Left cardiac atrium (tissue), 4 donors: ENCODE measurements at regions of chr6 and their contacts with region 1.

Region 1: GRCh38 chr6:135506270-135506997 is 8.9 kb upstream of the AHI1 start:
- DNase-seq: no peak
- ATAC-seq: peak in 1 of 2 donors; percentile 49

Region 2: GRCh38 chr6:136317021-136317694 is 810.7 kb after region 1 on chr6:
- intact Hi-C with region 1: loop called in 1 of 2 experiments (anchors 2 kb)
- DNase-seq: peak; percentile 36
- ATAC-seq: peak; percentile 67 to 79